Common myeloid progenitor, CD34-positive (primary cell): ENCODE measurements at regions of chr3 and their contacts with region 1.

Region 1: GRCh38 chr3:25454005-25454927 is 26.2 kb downstream of the RARB start:
- DNase-seq: no peak
- H3K4me3 ChIP-seq: no peak overlapping the region
- H3K27ac ChIP-seq: no peak overlapping the region
- H3K4me1 ChIP-seq: peaks cover 0 to 5% (median 0%) of the 10 kb centered on the region in 4 experiments
- H3K27me3 ChIP-seq: no peaks in the 10 kb centered on the region

Region 2: GRCh38 chr3:25441234-25441856 is 12.9 kb before region 1 on chr3:
- CTCF ChIA-PET with region 1: interaction called, 14 read pairs
- POLR2A ChIA-PET with region 1: no interaction called
- DNase-seq: peak; percentile 24 to 25 (median 24)
- H3K4me3 ChIP-seq: no peak overlapping the region
- H3K27ac ChIP-seq: no peak overlapping the region
- H3K4me1 ChIP-seq: no peaks in the 10 kb centered on the region
- H3K27me3 ChIP-seq: no peaks in the 10 kb centered on the region